GM13976 (cell line): ENCODE measurements at regions of chr2 and their contacts with region 1.

Region 1: DNA sequence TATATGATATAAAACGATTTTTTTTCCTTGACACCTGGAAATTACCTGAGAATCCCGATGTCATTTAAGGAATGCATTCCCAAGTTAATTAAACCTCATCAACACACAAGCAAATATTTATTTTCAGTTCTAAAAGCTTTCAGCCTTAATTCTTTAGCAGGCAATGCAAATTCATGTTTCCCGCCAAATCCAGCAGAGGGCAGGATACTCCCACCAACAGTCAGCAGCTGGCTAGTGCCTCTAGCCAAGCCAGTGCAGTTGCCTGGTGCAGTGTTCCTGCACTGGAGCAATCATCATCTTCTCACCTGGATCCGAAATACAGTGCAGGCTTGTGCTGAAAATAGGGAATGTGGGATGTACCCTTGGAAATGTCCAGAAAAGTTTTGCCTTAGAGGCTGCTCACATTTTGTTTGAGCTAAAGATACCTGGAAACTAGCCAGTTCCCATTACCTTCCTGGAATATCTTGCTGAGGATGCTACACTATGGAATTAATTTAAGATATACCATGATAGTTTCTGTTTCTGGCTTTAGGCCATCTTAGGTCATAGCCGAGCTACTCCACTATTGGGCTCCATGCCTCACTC is 48.4 kb upstream of the CYTIP start:
- DNase-seq: peak; percentile 57
- CTCF ChIP-seq: peak; percentile 78

Region 2: GRCh38 chr2:157327621-157328500 is 164.4 kb before region 1 on chr2:
- in situ Hi-C with region 1: loop called (anchors 10 kb)
- DNase-seq: peak; percentile 74
- CTCF ChIP-seq: peak; percentile 97

Region 3: GRCh38 chr2:157898591-157898996 is 406.3 kb after region 1 on chr2:
- in situ Hi-C with region 1: no loop called
- DNase-seq: no peak
- CTCF ChIP-seq: no peak